Heart right ventricle (tissue), 16 donors: ENCODE measurements at regions of chr9 and their contacts with region 1.

Region 1: GRCh38 chr9:131739980-131740648 is at the start of gene RAPGEF1:
- DNase-seq: peak; percentile 63 to 83
- ATAC-seq: peak; percentile 50 to 77 (median 60)
- H3K4me3 ChIP-seq: peak within 1 kb of the TSS; percentile 58 to 90 (median 70)
- H3K27ac ChIP-seq: peak within 1 kb of the TSS; percentile 70 to 96 (median 90)
- H3K4me1 ChIP-seq: peaks cover 10 to 59% (median 49%) of the 10 kb centered on the region in 9 donors
- H3K27me3 ChIP-seq: no peaks in the 10 kb centered on the region
- CTCF ChIP-seq: peak; percentile 71 to 97 (median 85)
- total RNA-seq, gene RAPGEF1: 84.0 to 135 (median 120) TPM

Region 2: DNA sequence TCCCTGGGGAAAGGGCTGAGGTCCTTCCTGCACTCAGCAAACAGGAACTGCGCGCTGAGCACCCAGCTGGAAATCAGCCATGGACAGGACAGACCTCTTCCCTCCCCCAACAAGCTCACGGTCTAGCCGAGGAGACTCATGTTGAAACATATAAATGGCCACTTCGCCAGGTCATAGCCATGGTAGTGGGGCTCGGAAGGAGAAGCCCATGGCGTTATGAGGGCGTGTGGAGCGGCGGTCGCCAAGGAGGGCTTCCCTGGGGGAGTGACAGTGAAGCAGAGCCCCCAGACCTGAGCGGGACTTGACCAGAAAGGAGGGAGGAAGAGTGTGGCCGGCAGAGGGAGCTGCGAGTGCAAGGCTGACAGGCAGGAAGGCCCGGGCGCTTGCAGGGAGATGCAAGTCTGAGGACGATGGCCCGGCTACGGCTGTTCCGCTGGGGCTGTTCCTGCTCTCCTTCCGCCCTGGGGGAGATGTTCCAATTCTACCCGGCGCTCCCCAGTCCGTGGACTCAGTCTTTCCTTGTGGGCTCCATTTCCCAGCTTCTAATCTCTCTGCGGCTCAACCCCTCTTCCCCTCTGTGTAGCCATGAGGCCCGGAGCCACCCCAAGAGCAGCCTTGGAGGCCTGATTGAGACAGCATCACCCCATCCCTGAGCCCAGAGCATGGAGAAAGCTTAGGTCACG is 390.1 kb before region 1 on chr9:
- intact Hi-C with region 1: loop called in 7 of 10 experiments (anchors 5 to 10 kb)
- DNase-seq: peak; percentile 91 to 92
- ATAC-seq: peak; percentile 89 to 97 (median 94)
- H3K4me3 ChIP-seq: peak overlapping the region in 8 of 10 donors; percentile 4 to 45 (median 38)
- H3K27ac ChIP-seq: peak overlapping the region in 2 of 10 donors; percentile 20 to 24
- H3K4me1 ChIP-seq: peaks cover 4 to 12% (median 10%) of the 10 kb centered on the region in 9 donors
- H3K27me3 ChIP-seq: no peaks in the 10 kb centered on the region
- CTCF ChIP-seq: peak; percentile 72 to 95 (median 89)

Region 3: GRCh38 chr9:131502781-131503625 is 237.1 kb before region 1 on chr9 and contains the start of gene POMT1:
- intact Hi-C with region 1: loop called in 2 of 10 experiments (anchors 10 kb)
- DNase-seq: peak; percentile 85 to 90
- ATAC-seq: peak; percentile 94 to 97 (median 96)
- H3K4me3 ChIP-seq: peak within 1 kb of the TSS; percentile 62 to 100 (median 96)
- H3K27ac ChIP-seq: peak within 1 kb of the TSS in 9 of 10 donors; percentile 47 to 88 (median 82)
- H3K4me1 ChIP-seq: peaks cover 7 to 36% (median 17%) of the 10 kb centered on the region in 9 donors
- H3K27me3 ChIP-seq: no peaks in the 10 kb centered on the region
- CTCF ChIP-seq: no peak
- total RNA-seq, gene POMT1: 17.0 to 27.6 (median 21.2) TPM

Region 4: GRCh38 chr9:131578731-131579504 is 161.2 kb before region 1 on chr9:
- intact Hi-C with region 1: no loop called
- DNase-seq: no peak
- ATAC-seq: peak in 1 of 8 donors; percentile 27
- H3K4me3 ChIP-seq: no peak overlapping the region
- H3K27ac ChIP-seq: peak overlapping the region in 3 of 10 donors; percentile 5 to 71 (median 9)
- H3K4me1 ChIP-seq: peaks cover 0 to 29% (median 13%) of the 10 kb centered on the region in 9 donors
- H3K27me3 ChIP-seq: no peaks in the 10 kb centered on the region
- CTCF ChIP-seq: no peak

Region 5: GRCh38 chr9:131590908-131591844 is 148.9 kb before region 1 on chr9:
- intact Hi-C with region 1: loop called (anchors 1 to 5 kb)
- DNase-seq: peak; percentile 73 to 86
- ATAC-seq: peak; percentile 85 to 93 (median 90)
- H3K4me3 ChIP-seq: no peak overlapping the region
- H3K27ac ChIP-seq: peak overlapping the region in 1 of 10 donors; percentile 50
- H3K4me1 ChIP-seq: peaks cover 0 to 32% (median 4%) of the 10 kb centered on the region in 9 donors
- H3K27me3 ChIP-seq: no peaks in the 10 kb centered on the region
- CTCF ChIP-seq: peak; percentile 74 to 92 (median 84)

Region 6: DNA sequence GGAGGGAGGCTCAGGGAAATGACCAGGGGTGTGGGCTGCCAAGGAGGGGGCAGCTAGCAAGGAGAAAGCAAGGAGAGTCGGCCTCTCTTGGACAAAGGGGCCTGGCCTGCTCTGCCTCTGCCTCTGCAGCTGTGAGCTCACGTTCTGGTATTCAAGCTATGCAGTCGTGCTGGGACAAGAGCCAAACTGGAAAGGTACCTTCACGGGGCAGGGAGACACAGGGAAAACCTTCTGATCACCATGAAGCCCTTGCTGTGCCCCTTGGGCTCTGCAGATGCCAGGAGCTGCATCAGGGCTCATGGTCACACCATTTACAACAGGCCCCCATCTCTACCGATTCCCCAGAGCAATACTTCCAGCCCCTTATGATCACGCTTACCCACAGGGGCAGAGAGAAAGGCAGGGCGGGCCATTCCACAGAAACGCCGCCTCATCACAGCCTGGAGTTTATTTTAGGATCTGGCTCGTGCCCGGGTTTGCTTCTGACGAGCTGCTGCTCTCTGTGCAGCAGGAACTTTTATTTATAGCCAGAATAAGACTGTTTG is 131.5 kb before region 1 on chr9:
- intact Hi-C with region 1: loop called in 3 of 10 experiments (anchors 5 kb)
- DNase-seq: peak; percentile 59 to 86
- ATAC-seq: peak; percentile 73 to 85 (median 78)
- H3K4me3 ChIP-seq: peak overlapping the region in 7 of 10 donors; percentile 2 to 18 (median 18)
- H3K27ac ChIP-seq: peak overlapping the region; percentile 26 to 93 (median 88)
- H3K4me1 ChIP-seq: peaks cover 29 to 98% (median 73%) of the 10 kb centered on the region in 9 donors
- H3K27me3 ChIP-seq: no peaks in the 10 kb centered on the region
- CTCF ChIP-seq: no peak

Region 7: DNA sequence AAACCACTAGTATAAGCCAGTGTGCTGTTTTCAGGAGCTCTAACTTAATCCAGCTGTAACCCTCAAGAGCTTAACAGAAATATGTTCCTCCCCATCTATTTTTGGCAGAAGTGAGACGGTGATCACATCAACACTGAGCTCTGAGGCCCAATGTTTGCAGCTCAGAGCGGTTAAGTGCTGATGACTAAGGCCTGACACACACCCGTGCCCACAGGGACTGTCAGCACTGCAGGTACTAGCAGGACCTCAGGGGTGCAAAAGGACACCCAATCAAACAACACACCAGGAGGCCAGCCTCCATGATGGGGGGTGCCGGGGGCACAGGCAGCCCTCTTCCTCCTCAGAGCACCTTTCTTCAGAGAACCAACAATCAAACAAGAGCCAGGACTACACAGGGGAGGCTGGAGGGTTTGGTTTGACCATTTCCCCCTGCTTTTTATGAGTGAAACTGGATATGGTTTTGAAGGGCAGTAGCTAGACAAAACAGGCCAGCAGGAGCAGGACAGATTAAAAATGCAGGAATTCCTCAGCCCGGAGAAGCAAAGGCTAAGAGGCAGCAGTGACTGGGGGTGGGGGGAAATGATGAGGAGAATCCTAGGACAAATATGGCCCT is 61.5 kb before region 1 on chr9:
- intact Hi-C with region 1: loop called in 4 of 10 experiments (anchors 5 to 10 kb)
- DNase-seq: peak; percentile 66 to 69
- ATAC-seq: peak; percentile 76 to 98 (median 87)
- H3K4me3 ChIP-seq: peak overlapping the region in 1 of 10 donors; percentile 1
- H3K27ac ChIP-seq: peak overlapping the region; percentile 70 to 91 (median 82)
- H3K4me1 ChIP-seq: peaks cover 37 to 100% (median 92%) of the 10 kb centered on the region in 9 donors
- H3K27me3 ChIP-seq: no peaks in the 10 kb centered on the region
- CTCF ChIP-seq: no peak

Region 8: GRCh38 chr9:131704141-131704983 is 35.8 kb before region 1 on chr9:
- intact Hi-C with region 1: loop called in 2 of 10 experiments (anchors 5 kb)
- DNase-seq: no peak
- ATAC-seq: no peak
- H3K4me3 ChIP-seq: peak overlapping the region in 6 of 10 donors; percentile 2 to 54 (median 52)
- H3K27ac ChIP-seq: peak overlapping the region in 9 of 10 donors; percentile 15 to 91 (median 84)
- H3K4me1 ChIP-seq: peaks cover 9 to 100% (median 71%) of the 10 kb centered on the region in 9 donors
- H3K27me3 ChIP-seq: no peaks in the 10 kb centered on the region
- CTCF ChIP-seq: no peak